Activated CD4-positive, alpha-beta T cell treated with anti-CD3 and anti-CD28 coated beads for 36 hours (primary cell): ENCODE measurements at regions of chr7 and their contacts with region 1.

Region 1: GRCh38 chr7:70156057-70156456 is 557.8 kb downstream of the AUTS2 start:
- DNase-seq: no peak
- ATAC-seq: no peak
- H3K4me3 Mint-ChIP-seq: no peak overlapping the region
- H3K27ac Mint-ChIP-seq: no peak overlapping the region
- H3K4me1 Mint-ChIP-seq: no peaks in the 10 kb centered on the region
- H3K27me3 Mint-ChIP-seq: no peaks in the 10 kb centered on the region

Region 2: GRCh38 chr7:68176974-68177373 is 1979.1 kb before region 1 on chr7:
- CTCF ChIA-PET with region 1: no interaction called
- POLR2A ChIA-PET with region 1: no interaction called
- intact Hi-C with region 1: loop called in 1 of 2 experiments (anchors 2 kb)
- DNase-seq: peak; percentile 24
- ATAC-seq: no peak
- H3K4me3 Mint-ChIP-seq: no peak overlapping the region
- H3K27ac Mint-ChIP-seq: no peak overlapping the region
- H3K4me1 Mint-ChIP-seq: no peaks in the 10 kb centered on the region
- H3K27me3 Mint-ChIP-seq: no peaks in the 10 kb centered on the region

Region 3: DNA sequence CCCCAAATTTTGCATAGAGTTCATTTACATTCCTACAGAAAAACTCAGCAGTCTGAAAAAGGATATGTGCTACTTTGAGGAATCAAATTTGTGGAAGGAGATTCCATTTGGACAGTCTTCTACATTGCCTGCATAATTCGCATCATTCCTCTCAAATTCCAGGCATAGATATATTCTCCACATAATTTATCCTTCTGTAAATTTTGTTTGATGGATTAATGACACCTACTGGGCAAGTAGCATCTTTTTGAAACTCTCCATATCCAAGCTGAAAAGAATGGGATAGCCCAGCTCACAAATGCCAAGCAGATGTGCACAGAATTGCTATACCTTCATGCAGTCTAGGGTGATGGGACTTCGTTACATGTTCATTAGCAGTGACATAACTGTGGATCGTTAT is 42.5 kb before region 1 on chr7:
- CTCF ChIA-PET with region 1: no interaction called
- POLR2A ChIA-PET with region 1: no interaction called
- intact Hi-C with region 1: no loop called
- DNase-seq: no peak
- ATAC-seq: no peak
- H3K4me3 Mint-ChIP-seq: no peak overlapping the region
- H3K27ac Mint-ChIP-seq: no peak overlapping the region
- H3K4me1 Mint-ChIP-seq: no peaks in the 10 kb centered on the region
- H3K27me3 Mint-ChIP-seq: no peaks in the 10 kb centered on the region

Region 4: DNA sequence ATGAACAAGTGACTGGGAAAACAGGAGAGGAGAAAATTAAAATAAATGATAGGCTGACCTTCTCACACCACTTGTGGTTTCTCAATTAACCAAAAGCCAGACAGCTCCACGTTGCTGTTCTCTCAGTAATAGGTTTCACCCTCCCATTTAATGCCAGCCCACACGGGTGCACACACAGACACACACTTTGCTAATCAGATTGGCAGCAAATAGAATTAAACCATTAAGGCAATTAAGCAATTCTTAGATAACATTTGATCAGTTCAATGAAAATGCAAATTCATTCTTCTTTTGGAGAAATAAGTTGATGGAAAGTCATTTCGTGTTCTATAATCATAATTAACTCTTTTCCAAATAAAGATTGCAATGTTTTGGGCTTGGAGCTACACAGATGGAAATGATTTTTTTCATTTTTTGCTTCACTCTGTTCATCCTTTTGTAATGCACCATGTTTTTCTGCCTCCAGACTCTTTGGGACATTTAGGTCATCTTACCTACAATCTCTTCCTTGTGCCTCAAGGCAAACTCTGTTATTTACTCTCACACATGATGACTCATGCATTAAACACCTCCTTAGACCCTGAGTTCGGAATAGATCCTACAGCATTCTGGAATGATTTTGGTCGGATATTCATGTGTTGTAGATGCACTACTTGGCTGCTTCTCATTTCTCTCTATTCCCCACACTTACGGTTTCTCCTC is 142.9 kb after region 1 on chr7:
- CTCF ChIA-PET with region 1: no interaction called
- POLR2A ChIA-PET with region 1: no interaction called
- intact Hi-C with region 1: no loop called
- DNase-seq: no peak
- ATAC-seq: no peak
- H3K4me3 Mint-ChIP-seq: no peak overlapping the region
- H3K27ac Mint-ChIP-seq: no peak overlapping the region
- H3K4me1 Mint-ChIP-seq: peaks cover 8% of the 10 kb centered on the region
- H3K27me3 Mint-ChIP-seq: no peaks in the 10 kb centered on the region

Region 5: GRCh38 chr7:70630818-70631457 is 474.9 kb after region 1 on chr7:
- CTCF ChIA-PET with region 1: no interaction called
- POLR2A ChIA-PET with region 1: no interaction called
- intact Hi-C with region 1: no loop called
- DNase-seq: no peak
- ATAC-seq: no peak
- H3K4me3 Mint-ChIP-seq: no peak overlapping the region
- H3K27ac Mint-ChIP-seq: no peak overlapping the region
- H3K4me1 Mint-ChIP-seq: no peaks in the 10 kb centered on the region
- H3K27me3 Mint-ChIP-seq: peaks cover 3% of the 10 kb centered on the region